Vagina (tissue), 2 donors: ENCODE measurements at regions of chr22 and their contacts with region 1.

Region 1: GRCh38 chr22:45450921-45451651 is 37.6 kb downstream of the RIBC2 start:
- DNase-seq: no peak
- H3K4me3 ChIP-seq: peak overlapping the region in 1 of 2 donors; percentile 9
- H3K27ac ChIP-seq: peak overlapping the region; percentile 90
- H3K4me1 ChIP-seq: peaks cover 73% of the 10 kb centered on the region
- H3K27me3 ChIP-seq: no peaks in the 10 kb centered on the region
- CTCF ChIP-seq: no peak
- POLR2A ChIP-seq: no peak

Region 2: DNA sequence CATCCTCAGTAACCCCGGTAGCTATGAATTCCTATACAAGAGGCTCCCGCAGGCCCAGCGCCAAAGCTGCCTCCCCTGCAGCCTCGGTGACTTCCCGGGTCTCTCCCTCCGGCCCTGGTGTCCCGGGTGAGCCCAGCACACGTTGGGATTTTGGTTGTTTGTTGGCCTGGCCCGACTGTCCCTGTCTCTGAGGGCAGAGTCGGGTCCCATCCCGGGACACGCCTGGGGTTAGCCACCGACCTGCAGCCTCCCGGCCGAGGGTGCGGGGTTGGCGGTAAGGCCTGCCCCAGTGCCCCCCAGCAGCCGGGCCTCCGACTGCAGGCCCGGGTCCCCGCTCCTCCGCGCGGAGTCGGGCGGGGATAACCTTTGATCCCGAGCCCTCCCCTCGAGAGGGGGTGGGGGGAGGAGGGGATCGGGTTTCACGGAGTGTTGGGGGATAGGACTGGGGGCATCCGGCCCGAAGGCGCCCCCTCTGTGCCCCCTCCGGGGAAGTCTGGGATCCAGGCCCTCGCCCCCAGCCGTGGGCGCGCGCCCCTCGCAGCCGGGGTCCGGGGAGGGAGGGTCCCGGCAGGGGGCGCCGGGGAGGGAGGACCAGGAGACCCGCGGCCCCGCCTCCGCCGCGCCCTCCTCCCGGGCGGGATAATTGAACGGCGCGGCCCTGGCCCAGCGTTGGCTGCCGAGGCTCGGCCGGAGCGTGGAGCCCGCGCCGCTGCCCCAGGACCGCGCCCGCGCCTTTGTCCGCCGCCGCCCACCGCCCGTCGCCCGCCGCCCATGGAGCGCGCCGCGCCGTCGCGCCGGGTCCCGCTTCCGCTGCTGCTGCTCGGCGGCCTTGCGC is 51.3 kb after region 1 on chr22 and contains the start of gene FBLN1:
- intact Hi-C with region 1: loop called (anchors 5 kb)
- DNase-seq: no peak
- H3K4me3 ChIP-seq: peak within 1 kb of the TSS; percentile 75 to 82
- H3K27ac ChIP-seq: peak within 1 kb of the TSS; percentile 92
- H3K4me1 ChIP-seq: peaks cover 66% of the 10 kb centered on the region
- H3K27me3 ChIP-seq: no peaks in the 10 kb centered on the region
- CTCF ChIP-seq: peak in 2 of 3 experiments; percentile 15 to 51
- POLR2A ChIP-seq: peak in 1 of 2 donors; percentile 66
- total RNA-seq, gene FBLN1: 1,019 TPM

Region 3: DNA sequence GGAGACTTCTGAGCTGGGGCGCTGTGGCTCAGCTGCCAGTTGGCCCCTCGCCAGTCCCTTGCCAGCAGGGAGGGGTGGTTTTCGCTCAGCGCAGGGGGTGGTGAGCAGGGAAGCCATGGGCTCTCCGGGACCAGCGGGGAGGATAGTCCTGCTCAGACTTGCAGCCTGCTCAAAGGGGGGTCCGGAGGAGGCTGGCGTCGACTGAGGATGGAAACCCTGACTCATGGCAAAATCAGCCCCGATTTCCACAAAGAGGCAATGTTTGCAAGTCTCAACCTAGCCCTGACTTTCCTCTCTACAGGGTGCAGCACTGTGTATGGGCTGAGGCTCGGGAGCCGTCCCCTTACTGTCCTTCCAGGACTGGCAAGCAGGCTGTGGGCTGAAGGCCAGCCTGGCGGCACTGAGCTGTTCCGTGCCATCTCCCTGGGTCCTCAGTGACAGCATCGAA is 86.7 kb after region 1 on chr22:
- intact Hi-C with region 1: loop called (anchors 5 kb)
- DNase-seq: peak in 1 of 2 donors; percentile 97
- H3K4me3 ChIP-seq: no peak overlapping the region
- H3K27ac ChIP-seq: peak overlapping the region; percentile 92
- H3K4me1 ChIP-seq: peaks cover 63% of the 10 kb centered on the region
- H3K27me3 ChIP-seq: no peaks in the 10 kb centered on the region
- CTCF ChIP-seq: no peak
- POLR2A ChIP-seq: no peak

Region 4: GRCh38 chr22:45968751-45969413 is 517.8 kb after region 1 on chr22:
- intact Hi-C with region 1: no loop called
- DNase-seq: no peak
- H3K4me3 ChIP-seq: no peak overlapping the region
- H3K27ac ChIP-seq: no peak overlapping the region
- H3K4me1 ChIP-seq: peaks cover 25% of the 10 kb centered on the region
- H3K27me3 ChIP-seq: peaks cover 8% of the 10 kb centered on the region
- CTCF ChIP-seq: no peak
- POLR2A ChIP-seq: no peak